Naive thymus-derived CD8-positive, alpha-beta T cell (primary cell): ENCODE measurements at regions of chr4 and their contacts with region 1.

Region 1: GRCh38 chr4:99563310-99564186 is at the start of gene TRMT10A:
- DNase-seq: peak; percentile 86 to 99 (median 97)
- ATAC-seq: peak; percentile 85 to 88
- H3K4me3 Mint-ChIP-seq: peak within 1 kb of the TSS; percentile 92 to 99 (median 96)
- H3K27ac Mint-ChIP-seq: peak within 1 kb of the TSS; percentile 97 to 100 (median 100)
- H3K4me1 Mint-ChIP-seq: peaks cover 2 to 29% (median 14%) of the 10 kb centered on the region in 4 donors
- H3K27me3 Mint-ChIP-seq: peaks cover 12 to 35% (median 15%) of the 10 kb centered on the region in 5 donors
- polyA plus RNA-seq, gene TRMT10A: 2.5 to 2.9 (median 2.6) TPM

Region 2: DNA sequence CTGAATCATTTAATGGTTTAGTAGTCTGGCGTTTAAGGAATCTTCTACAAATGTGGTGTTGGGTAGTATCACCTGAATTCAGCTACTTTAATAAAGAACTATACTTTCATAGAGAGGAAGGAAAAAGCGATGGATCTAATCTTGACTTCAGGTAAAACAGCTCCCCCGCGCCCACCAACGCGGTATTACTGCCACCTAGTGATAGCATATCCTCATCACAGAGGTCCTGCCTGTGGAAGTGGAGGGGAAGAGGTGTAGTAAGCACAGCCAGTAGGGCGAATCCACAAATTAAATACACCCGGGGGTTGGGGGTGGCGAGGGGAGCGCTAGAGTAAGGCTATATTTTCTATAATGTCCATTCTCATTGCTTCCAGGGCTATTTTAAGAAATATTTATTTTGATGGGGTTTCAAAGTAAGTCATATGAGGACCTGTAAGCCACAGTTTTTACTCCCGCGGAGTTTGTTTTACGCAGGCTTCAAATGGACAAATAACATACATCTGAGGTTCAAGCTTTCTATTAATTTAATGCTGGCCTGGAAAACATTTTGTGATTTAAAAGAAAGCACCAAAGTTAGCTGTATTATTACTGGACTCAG is 244.8 kb after region 1 on chr4:
- POLR2A ChIA-PET with region 1: interaction called, 11 read pairs
- DNase-seq: peak; percentile 36 to 83 (median 64)
- ATAC-seq: peak; percentile 98 to 99
- H3K4me3 Mint-ChIP-seq: no peak overlapping the region
- H3K27ac Mint-ChIP-seq: peak overlapping the region in 1 of 10 donors; percentile 22
- H3K4me1 Mint-ChIP-seq: peaks cover 3 to 7% (median 4%) of the 10 kb centered on the region in 4 donors
- H3K27me3 Mint-ChIP-seq: peaks cover 0 to 10% (median 3%) of the 10 kb centered on the region in 5 donors

Region 3: DNA sequence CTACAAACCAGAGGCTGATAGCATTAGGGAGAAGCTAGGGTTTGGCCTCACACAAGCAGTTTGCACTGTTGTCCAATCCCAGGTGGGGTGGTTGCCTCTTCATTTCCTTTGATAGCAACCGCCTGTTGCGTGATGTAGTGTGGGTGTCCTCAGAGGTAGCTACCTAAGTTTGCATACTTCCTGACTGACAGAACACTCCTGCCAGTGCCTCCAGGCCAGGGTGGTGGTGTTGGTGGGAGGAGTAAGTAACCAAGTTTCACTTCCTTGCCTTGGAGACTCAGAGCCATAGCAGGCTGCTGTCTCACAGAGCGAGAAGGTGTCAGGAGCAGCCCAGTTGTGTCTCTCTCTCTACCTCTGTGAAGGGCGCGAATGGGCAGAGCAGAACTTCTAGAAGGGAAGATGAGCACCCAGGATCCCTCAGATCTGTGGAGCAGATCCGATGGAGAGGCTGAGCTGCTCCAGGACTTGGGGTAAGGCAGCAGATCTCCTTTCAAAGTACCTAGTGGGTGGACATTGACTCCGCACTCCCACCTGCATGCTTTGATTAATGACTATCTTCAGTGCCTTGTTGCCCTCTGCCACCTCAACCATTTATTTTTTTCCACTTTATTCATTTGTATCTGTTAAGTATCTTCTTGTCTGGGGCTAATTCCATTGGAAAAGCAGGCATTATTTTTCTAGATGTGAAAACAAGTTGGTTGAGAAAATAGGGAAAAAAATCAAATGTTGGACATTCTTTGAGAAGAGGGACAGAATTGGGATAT is 253.2 kb after region 1 on chr4 and contains the start of gene DAPP1:
- POLR2A ChIA-PET with region 1: interaction called, 10 read pairs
- DNase-seq: peak; percentile 39 to 88 (median 73)
- ATAC-seq: peak; percentile 96 to 97
- H3K4me3 Mint-ChIP-seq: peak within 1 kb of the TSS; percentile 85 to 95 (median 91)
- H3K27ac Mint-ChIP-seq: peak within 1 kb of the TSS; percentile 81 to 98 (median 96)
- H3K4me1 Mint-ChIP-seq: peaks cover 29 to 65% (median 62%) of the 10 kb centered on the region in 4 donors
- H3K27me3 Mint-ChIP-seq: no peaks in the 10 kb centered on the region
- polyA plus RNA-seq, gene DAPP1: 8.6 to 17.0 (median 12.2) TPM

Region 4: DNA sequence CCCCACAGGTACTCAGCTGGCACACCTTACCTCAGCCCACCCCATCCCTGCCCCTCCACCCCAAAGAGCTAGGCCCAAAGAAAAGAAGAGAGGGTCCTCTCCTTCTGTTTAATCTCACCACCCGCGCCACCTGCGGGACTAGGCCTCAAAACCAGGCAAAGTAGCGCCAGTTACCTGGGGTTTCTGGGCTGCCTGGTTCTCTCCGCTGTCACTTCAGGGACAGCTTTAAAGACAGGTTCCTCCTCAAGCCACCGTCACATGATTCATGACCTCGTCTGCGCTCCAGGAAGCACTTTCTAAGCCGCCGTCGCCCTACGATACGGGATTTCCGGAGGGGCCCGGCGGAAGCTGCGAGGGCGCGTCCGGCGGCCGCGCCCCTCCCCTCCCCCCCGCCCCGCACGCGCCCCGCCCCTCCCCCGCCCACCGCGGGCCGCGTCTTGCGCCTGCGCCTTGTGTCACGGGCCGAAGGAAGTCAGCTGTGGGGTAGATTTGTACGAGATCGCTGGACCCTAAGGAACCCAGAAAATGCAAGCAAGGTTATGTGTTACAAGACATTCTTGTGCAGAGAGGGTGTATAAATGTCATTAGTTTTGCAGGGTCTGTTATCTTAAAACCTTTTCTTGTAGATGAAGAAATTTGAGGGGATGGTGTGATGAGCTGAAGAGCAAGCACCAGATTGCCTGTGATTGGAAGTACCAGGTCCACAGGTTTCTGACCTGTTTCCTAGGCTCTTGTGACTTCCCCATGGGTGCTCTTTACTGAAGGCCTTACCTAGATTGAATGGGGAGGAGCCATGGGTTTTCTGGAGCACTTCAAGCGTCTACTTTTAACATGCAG is 330.8 kb after region 1 on chr4 and contains the start of gene LAMTOR3:
- POLR2A ChIA-PET with region 1: interaction called, 20 read pairs
- DNase-seq: peak; percentile 81 to 93 (median 88)
- ATAC-seq: peak; percentile 99
- H3K4me3 Mint-ChIP-seq: peak within 1 kb of the TSS; percentile 92 to 99 (median 98)
- H3K27ac Mint-ChIP-seq: peak within 1 kb of the TSS; percentile 96 to 99 (median 99)
- H3K4me1 Mint-ChIP-seq: peaks cover 17 to 53% (median 47%) of the 10 kb centered on the region in 4 donors
- H3K27me3 Mint-ChIP-seq: no peaks in the 10 kb centered on the region
- polyA plus RNA-seq, gene LAMTOR3: 29.0 to 35.6 (median 29.7) TPM